CD4-positive, alpha-beta T cell (primary cell): ENCODE measurements at regions of chr19 and their contacts with region 1.

Region 1: DNA sequence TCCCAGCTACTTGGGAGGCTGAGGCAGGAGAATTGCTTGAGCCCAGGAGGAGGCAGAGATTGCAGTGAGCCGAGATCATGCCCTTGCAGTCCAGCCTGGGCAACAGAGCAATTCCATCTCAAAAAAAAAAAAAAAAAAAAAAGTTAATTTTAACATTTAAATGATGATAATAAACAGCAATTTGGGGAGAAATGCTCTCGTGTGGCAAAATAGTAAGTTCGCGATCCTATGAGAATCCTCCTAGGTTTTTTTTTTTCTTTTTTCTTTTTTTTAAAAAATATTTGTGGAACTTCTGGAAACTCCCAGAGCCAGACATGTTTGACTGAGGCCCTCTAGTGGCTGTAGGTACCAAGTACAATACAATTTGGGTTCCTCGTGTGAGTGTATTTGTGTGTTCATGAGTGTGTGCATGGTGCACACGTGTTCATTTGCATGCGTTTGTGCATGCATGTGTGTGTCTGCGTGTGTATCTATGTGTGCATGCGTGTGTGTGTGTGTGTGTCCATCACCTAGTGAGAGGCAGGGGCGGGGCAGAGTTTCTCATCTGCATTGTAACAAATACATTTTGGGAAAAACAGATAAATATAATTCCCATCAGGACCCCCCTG is 31.2 kb downstream of the TMPRSS9 start:
- DNase-seq: peak in 12 of 14 experiments; percentile 6 to 83 (median 23)
- ATAC-seq: peak; percentile 85
- H3K4me3 ChIP-seq: no peak overlapping the region
- H3K4me3 Mint-ChIP-seq: no peak overlapping the region
- H3K27ac ChIP-seq: no peak overlapping the region
- H3K27ac Mint-ChIP-seq: no peak overlapping the region
- H3K4me1 ChIP-seq: peaks cover 12% of the 10 kb centered on the region
- H3K4me1 Mint-ChIP-seq: peaks cover 4% of the 10 kb centered on the region
- H3K27me3 ChIP-seq: no peaks in the 10 kb centered on the region
- H3K27me3 Mint-ChIP-seq: peaks cover 12% of the 10 kb centered on the region
- CTCF ChIP-seq: peak; percentile 81

Region 2: DNA sequence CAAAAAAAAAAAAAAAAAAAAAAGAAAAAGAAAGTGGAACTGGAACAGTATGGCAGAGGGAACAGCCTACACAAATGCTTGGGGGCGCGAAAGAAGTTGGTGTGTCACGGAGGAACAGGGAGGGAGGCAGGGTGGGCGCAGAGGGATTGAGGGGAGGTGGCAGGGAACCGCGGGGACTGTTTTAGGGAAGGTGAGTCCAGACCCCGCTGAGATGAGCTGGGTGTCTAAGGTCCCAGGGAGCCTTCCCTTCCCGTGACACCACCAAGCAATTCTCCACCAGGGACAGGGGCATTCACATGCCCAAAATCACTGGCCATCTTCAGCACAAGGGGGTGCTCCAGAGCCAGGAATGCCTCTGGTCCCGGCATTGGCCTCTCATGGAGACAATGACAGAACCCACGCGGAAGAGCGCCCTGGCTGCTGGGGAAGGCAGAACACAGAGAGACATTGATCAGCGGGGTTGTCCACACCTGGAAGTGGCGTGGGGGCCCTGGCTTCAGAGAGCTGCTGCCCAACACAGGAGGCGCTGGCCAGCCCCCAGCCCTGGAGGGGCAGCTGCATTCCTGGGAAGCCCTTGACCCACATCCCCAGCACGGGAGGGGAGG is 116.2 kb before region 1 on chr19:
- CTCF ChIA-PET with region 1: no interaction called
- POLR2A ChIA-PET with region 1: interaction called, 4 read pairs
- intact Hi-C with region 1: loop called (anchors 1 kb)
- DNase-seq: peak in 8 of 14 experiments; percentile 42 to 77 (median 56)
- ATAC-seq: peak; percentile 17
- H3K4me3 ChIP-seq: no peak overlapping the region
- H3K4me3 Mint-ChIP-seq: peak overlapping the region; percentile 85
- H3K27ac ChIP-seq: no peak overlapping the region
- H3K27ac Mint-ChIP-seq: peak overlapping the region; percentile 97
- H3K4me1 ChIP-seq: peaks cover 47% of the 10 kb centered on the region
- H3K4me1 Mint-ChIP-seq: peaks cover 31% of the 10 kb centered on the region
- H3K27me3 ChIP-seq: peaks cover 0 to 6% of the 10 kb centered on the region in 2 experiments
- H3K27me3 Mint-ChIP-seq: no peaks in the 10 kb centered on the region
- CTCF ChIP-seq: peak; percentile 47